H1 (cell line): ENCODE measurements at regions of chr2 and their contacts with region 1.

Region 1: DNA sequence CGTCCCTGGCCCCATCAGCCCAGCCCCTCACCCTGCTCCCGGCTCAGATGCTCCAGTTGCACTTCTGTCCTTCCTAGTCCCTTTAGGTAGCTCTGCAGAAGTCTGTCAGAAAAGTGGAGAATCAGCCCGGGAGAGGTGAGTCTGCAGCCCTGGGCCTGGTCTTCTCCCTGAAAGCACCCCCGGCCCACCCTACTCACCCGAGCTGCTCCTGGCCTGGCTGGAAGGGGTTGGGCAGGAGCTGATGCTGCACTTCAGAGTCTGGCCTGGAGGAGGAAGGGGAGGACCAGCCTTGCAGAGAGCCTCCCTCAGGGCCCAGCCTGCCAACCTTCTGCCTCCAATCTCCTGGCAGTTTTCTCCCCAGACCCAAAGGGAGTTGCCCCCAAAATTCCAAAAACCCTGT is 15.8 kb downstream of the KHK start:
- DNase-seq: no peak
- H3K4me3 ChIP-seq: no peak overlapping the region
- H3K27ac ChIP-seq: no peak overlapping the region
- H3K4me1 ChIP-seq: no peaks in the 10 kb centered on the region
- H3K27me3 ChIP-seq: no peaks in the 10 kb centered on the region; a peak in 1 of 7 replicates
- CTCF ChIP-seq: no peak
- EP300 ChIP-seq: no peak
- POLR2A ChIP-seq: no peak
- RAD21 ChIP-seq: peak in 1 of 2 experiments; percentile 29; a peak in 1 of 4 replicates

Region 2: GRCh38 chr2:27086090-27086723 is 16.1 kb before region 1 on chr2:
- CTCF ChIA-PET with region 1: interaction called, 27 read pairs
- POLR2A ChIA-PET with region 1: interaction called, 5 read pairs
- DNase-seq: peak; percentile 79 to 99
- H3K4me3 ChIP-seq: peak overlapping the region; percentile 44 to 75 (median 61)
- H3K27ac ChIP-seq: no peak overlapping the region
- H3K4me1 ChIP-seq: peaks cover 4 to 23% (median 6%) of the 10 kb centered on the region in 4 experiments; a peak in 6 of 7 replicates
- H3K27me3 ChIP-seq: peaks cover 0 to 9% (median 4%) of the 10 kb centered on the region in 4 experiments; a peak in 2 of 7 replicates
- CTCF ChIP-seq: peak in 2 of 3 experiments; percentile 81 to 84; a peak in 3 of 4 replicates
- EP300 ChIP-seq: peak in 1 of 2 experiments; percentile 64; a peak in 1 of 3 replicates
- POLR2A ChIP-seq: peak in 1 of 2 experiments; percentile 40; a peak in 1 of 3 replicates
- RAD21 ChIP-seq: peak; percentile 32 to 48

Region 3: DNA sequence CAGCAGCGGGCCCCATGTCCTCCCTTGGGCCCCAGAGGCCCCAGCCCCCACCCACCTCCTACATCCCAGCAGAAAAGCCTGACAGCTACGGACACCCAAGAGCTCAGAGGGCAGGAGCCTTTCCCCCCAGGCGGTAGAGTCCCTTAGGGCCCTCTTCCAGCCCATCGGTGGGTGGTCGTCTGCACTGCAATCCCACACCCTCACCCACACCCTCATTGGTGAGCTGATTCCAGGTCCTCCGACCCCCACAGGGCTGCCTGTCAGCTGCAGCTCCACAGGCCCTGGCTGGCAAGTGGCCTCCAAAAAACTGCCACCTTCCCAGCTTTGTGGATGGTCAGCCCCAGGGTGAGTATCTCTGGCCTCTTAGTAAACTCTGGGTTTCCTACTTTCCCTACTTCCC is 56.9 kb after region 1 on chr2:
- CTCF ChIA-PET with region 1: interaction called, 10 read pairs
- POLR2A ChIA-PET with region 1: interaction called, 3 read pairs
- DNase-seq: no peak
- H3K4me3 ChIP-seq: no peak overlapping the region
- H3K27ac ChIP-seq: no peak overlapping the region
- H3K4me1 ChIP-seq: no peaks in the 10 kb centered on the region; a peak in 1 of 7 replicates
- H3K27me3 ChIP-seq: no peaks in the 10 kb centered on the region
- CTCF ChIP-seq: no peak
- EP300 ChIP-seq: no peak
- POLR2A ChIP-seq: no peak
- RAD21 ChIP-seq: no peak

Region 4: DNA sequence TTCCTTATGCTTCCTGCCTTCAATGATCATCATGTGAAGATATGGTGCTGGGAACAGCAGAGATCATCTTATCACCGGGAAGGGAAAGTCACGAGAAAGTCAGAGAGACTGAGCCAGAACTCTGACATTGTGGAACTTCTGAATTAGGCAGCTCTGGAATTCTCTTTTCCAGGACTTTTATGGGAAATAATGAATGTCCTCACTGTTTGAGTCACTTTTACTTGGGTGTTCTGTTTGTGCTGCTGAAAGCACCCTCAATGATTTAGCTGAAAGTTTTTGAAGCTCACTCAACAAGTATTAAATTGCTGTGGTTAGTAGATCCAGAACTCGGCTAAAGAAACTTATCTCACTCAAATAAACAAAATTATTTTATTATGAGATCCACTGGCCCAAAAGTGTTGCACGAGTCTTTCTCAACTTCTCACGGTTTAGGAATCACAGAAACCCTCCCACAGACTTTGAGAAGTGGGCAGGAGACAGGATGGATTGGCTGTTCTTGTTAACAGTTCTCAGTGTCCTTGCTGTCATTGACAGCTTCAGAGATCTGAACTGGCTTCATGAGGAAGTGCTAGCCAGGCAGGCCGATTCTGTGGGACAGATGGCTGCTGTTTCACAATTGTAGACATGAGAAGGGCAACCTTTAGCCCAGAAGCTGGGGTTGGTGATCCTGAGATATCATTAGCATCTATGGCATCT is 83.2 kb after region 1 on chr2:
- CTCF ChIA-PET with region 1: interaction called, 97 read pairs
- POLR2A ChIA-PET with region 1: no interaction called
- DNase-seq: no peak
- H3K4me3 ChIP-seq: no peak overlapping the region
- H3K27ac ChIP-seq: no peak overlapping the region
- H3K4me1 ChIP-seq: no peaks in the 10 kb centered on the region
- H3K27me3 ChIP-seq: no peaks in the 10 kb centered on the region
- CTCF ChIP-seq: no peak
- EP300 ChIP-seq: no peak
- POLR2A ChIP-seq: no peak
- RAD21 ChIP-seq: no peak